ENCODE measurements at regions of chr2 and their contacts with region 1.

Region 1: DNA sequence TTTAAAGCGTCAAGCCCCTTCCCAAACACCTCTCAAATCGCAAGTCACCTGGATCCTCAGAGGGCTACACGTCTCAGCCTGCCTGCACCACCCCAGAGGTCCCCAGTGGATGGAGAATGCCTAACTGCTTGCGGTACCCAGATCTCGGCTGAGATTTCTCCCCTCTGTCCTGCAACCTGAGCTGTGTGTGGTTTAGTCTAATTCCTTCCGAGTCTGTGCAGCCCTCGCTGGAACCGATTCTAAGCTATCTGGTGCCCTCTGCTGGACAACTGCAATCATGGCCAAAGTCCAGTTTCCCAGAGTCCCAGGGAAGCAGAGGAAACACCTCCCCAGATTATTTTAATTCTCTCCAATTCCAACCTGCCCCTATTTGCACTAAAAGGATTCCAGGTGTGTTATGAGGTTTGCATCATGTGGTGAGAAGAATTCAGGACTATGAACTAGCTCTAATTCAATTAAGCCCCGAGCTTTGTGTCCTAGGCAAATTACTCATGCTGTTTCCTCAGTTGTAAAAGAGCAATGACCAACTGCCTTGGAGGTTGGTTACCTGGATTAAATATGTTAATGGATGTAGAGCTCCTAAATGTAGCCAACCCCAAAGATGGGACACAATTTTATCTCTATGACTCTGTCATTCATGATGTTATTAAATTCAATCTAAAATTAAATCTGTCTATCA is 276.1 kb upstream of the NCKAP5 start:
- DNase-seq: peak; percentile 68 to 74 (median 70)
- ATAC-seq: peak; percentile 98
- H3K4me3 ChIP-seq: no peak overlapping the region
- H3K27ac ChIP-seq: no peak overlapping the region
- H3K4me1 ChIP-seq: no peaks in the 10 kb centered on the region
- H3K27me3 ChIP-seq: no peaks in the 10 kb centered on the region
- CTCF ChIP-seq: peak; percentile 72 to 87 (median 86)
- EP300 ChIP-seq: no peak
- POLR2A ChIP-seq: no peak
- RAD21 ChIP-seq: peak; percentile 79 to 87

Region 2: GRCh38 chr2:132547074-132547687 is 1297.2 kb before region 1 on chr2:
- CTCF ChIA-PET with region 1: no interaction called
- POLR2A ChIA-PET with region 1: no interaction called
- in situ Hi-C with region 1: no loop called
- intact Hi-C with region 1: loop called (anchors 1 kb)
- DNase-seq: peak; percentile 55 to 71 (median 56)
- ATAC-seq: peak; percentile 75
- H3K4me3 ChIP-seq: no peak overlapping the region
- H3K27ac ChIP-seq: no peak overlapping the region
- H3K4me1 ChIP-seq: no peaks in the 10 kb centered on the region
- H3K27me3 ChIP-seq: no peaks in the 10 kb centered on the region
- CTCF ChIP-seq: peak; percentile 58 to 71 (median 63)
- EP300 ChIP-seq: no peak
- POLR2A ChIP-seq: no peak
- RAD21 ChIP-seq: peak; percentile 37 to 69; a peak in 3 of 4 replicates

Region 3: GRCh38 chr2:133171393-133172004 is 672.9 kb before region 1 on chr2:
- CTCF ChIA-PET with region 1: no interaction called
- POLR2A ChIA-PET with region 1: no interaction called
- in situ Hi-C with region 1: no loop called
- intact Hi-C with region 1: loop called (anchors 10 kb)
- DNase-seq: peak in 2 of 4 experiments; percentile 8 to 51
- ATAC-seq: no peak
- H3K4me3 ChIP-seq: no peak overlapping the region
- H3K27ac ChIP-seq: no peak overlapping the region
- H3K4me1 ChIP-seq: no peaks in the 10 kb centered on the region
- H3K27me3 ChIP-seq: no peaks in the 10 kb centered on the region
- CTCF ChIP-seq: peak in 2 of 3 experiments; percentile 44 to 59; a peak in 5 of 6 replicates
- EP300 ChIP-seq: no peak
- POLR2A ChIP-seq: no peak
- RAD21 ChIP-seq: peak; percentile 47 to 75

Region 4: GRCh38 chr2:133561045-133561852 is 283.1 kb before region 1 on chr2:
- CTCF ChIA-PET with region 1: no interaction called
- POLR2A ChIA-PET with region 1: no interaction called
- in situ Hi-C with region 1: no loop called
- intact Hi-C with region 1: loop called (anchors 10 kb)
- DNase-seq: peak in 1 of 4 experiments; percentile 30
- ATAC-seq: 0 out of 3 replicates have a peak, but pooled peaks have one; percentile 34
- H3K4me3 ChIP-seq: no peak overlapping the region
- H3K27ac ChIP-seq: no peak overlapping the region
- H3K4me1 ChIP-seq: no peaks in the 10 kb centered on the region
- H3K27me3 ChIP-seq: no peaks in the 10 kb centered on the region
- CTCF ChIP-seq: peak; percentile 13 to 54 (median 32); a peak in 3 of 6 replicates
- EP300 ChIP-seq: no peak
- POLR2A ChIP-seq: no peak
- RAD21 ChIP-seq: peak; percentile 37 to 53; a peak in 3 of 4 replicates

Region 5: DNA sequence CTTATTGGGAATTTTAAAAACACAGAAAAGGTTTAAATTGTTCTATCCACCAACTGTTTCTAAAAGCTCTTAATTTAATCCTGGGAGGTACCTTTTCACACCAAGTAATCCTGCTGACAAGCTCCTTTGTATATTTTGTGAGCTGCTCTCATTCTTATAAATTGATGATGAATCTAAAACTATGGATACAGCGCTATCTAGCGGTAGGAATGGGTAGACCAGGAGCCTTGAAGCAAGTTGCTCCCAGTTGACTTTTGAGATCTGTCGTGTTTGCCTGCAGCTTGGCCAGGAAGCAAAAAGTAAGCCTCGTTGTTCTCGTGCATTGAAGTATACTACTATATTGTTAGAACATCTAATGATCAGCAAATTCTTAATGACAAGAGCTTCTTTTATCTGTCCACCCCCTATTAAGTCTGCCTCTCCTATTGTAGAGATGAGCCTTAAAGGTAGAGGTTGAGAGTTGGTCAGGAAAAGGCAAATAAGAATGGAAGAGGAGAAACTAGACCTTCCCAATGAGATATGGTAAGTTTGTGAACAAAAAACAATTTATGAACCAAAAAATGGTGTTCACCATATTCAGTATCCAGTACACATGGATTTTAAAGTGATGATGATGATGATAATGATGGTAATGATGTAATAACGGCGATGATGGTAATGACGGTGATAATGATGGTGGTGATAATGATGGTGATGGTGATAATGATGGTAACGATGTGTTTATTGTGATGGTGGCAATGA is 64.1 kb before region 1 on chr2:
- CTCF ChIA-PET with region 1: no interaction called
- POLR2A ChIA-PET with region 1: no interaction called
- in situ Hi-C with region 1: no loop called
- intact Hi-C with region 1: loop called (anchors 1 kb)
- DNase-seq: peak; percentile 33 to 68 (median 51)
- ATAC-seq: peak; percentile 72
- H3K4me3 ChIP-seq: no peak overlapping the region
- H3K27ac ChIP-seq: no peak overlapping the region
- H3K4me1 ChIP-seq: no peaks in the 10 kb centered on the region
- H3K27me3 ChIP-seq: no peaks in the 10 kb centered on the region
- CTCF ChIP-seq: peak; percentile 55 to 78 (median 74)
- EP300 ChIP-seq: no peak
- POLR2A ChIP-seq: no peak
- RAD21 ChIP-seq: peak; percentile 44 to 66

Region 6: GRCh38 chr2:133871545-133872209 is 27.3 kb after region 1 on chr2:
- CTCF ChIA-PET with region 1: no interaction called
- POLR2A ChIA-PET with region 1: no interaction called
- in situ Hi-C with region 1: no loop called
- intact Hi-C with region 1: no loop called
- DNase-seq: no peak
- ATAC-seq: no peak
- H3K4me3 ChIP-seq: no peak overlapping the region
- H3K27ac ChIP-seq: no peak overlapping the region
- H3K4me1 ChIP-seq: no peaks in the 10 kb centered on the region
- H3K27me3 ChIP-seq: no peaks in the 10 kb centered on the region
- CTCF ChIP-seq: no peak
- EP300 ChIP-seq: no peak
- POLR2A ChIP-seq: no peak
- RAD21 ChIP-seq: no peak